CD8-positive, alpha-beta T cell (primary cell): ENCODE measurements at regions of chr3 and their contacts with region 1.

Region 1: GRCh38 chr3:184874709-184875644 is 63.0 kb downstream of the VPS8 start:
- DNase-seq: peak in 2 of 9 experiments; percentile 6 to 12
- ATAC-seq: no peak
- H3K4me3 ChIP-seq: no peak overlapping the region
- H3K4me3 Mint-ChIP-seq: no peak overlapping the region
- H3K27ac ChIP-seq: no peak overlapping the region
- H3K27ac Mint-ChIP-seq: peak overlapping the region; percentile 13
- H3K4me1 ChIP-seq: no peaks in the 10 kb centered on the region
- H3K4me1 Mint-ChIP-seq: no peaks in the 10 kb centered on the region
- H3K27me3 ChIP-seq: no peaks in the 10 kb centered on the region
- H3K27me3 Mint-ChIP-seq: no peaks in the 10 kb centered on the region
- CTCF ChIP-seq: peak; percentile 44

Region 2: GRCh38 chr3:183937610-183938230 is 937.3 kb before region 1 on chr3:
- CTCF ChIA-PET with region 1: no interaction called
- POLR2A ChIA-PET with region 1: no interaction called
- intact Hi-C with region 1: no loop called
- DNase-seq: no peak
- ATAC-seq: no peak
- H3K4me3 ChIP-seq: no peak overlapping the region
- H3K4me3 Mint-ChIP-seq: no peak overlapping the region
- H3K27ac ChIP-seq: no peak overlapping the region
- H3K27ac Mint-ChIP-seq: no peak overlapping the region
- H3K4me1 ChIP-seq: no peaks in the 10 kb centered on the region
- H3K4me1 Mint-ChIP-seq: no peaks in the 10 kb centered on the region
- H3K27me3 ChIP-seq: no peaks in the 10 kb centered on the region
- H3K27me3 Mint-ChIP-seq: no peaks in the 10 kb centered on the region
- CTCF ChIP-seq: no peak

Region 3: GRCh38 chr3:184788751-184789150 is 86.2 kb before region 1 on chr3:
- CTCF ChIA-PET with region 1: no interaction called
- POLR2A ChIA-PET with region 1: no interaction called
- intact Hi-C with region 1: no loop called
- DNase-seq: no peak
- ATAC-seq: no peak
- H3K4me3 ChIP-seq: no peak overlapping the region
- H3K4me3 Mint-ChIP-seq: no peak overlapping the region
- H3K27ac ChIP-seq: no peak overlapping the region
- H3K27ac Mint-ChIP-seq: no peak overlapping the region
- H3K4me1 ChIP-seq: peaks cover 25% of the 10 kb centered on the region
- H3K4me1 Mint-ChIP-seq: peaks cover 27% of the 10 kb centered on the region
- H3K27me3 ChIP-seq: no peaks in the 10 kb centered on the region
- H3K27me3 Mint-ChIP-seq: peaks cover 4% of the 10 kb centered on the region
- CTCF ChIP-seq: no peak

Region 4: GRCh38 chr3:185176750-185177359 is 301.9 kb after region 1 on chr3:
- CTCF ChIA-PET with region 1: interaction called, 5 read pairs
- POLR2A ChIA-PET with region 1: no interaction called
- intact Hi-C with region 1: loop called in 1 of 2 experiments (anchors 5 kb)
- DNase-seq: peak in 2 of 9 experiments; percentile 19 to 36
- ATAC-seq: no peak
- H3K4me3 ChIP-seq: no peak overlapping the region
- H3K4me3 Mint-ChIP-seq: no peak overlapping the region
- H3K27ac ChIP-seq: no peak overlapping the region
- H3K27ac Mint-ChIP-seq: no peak overlapping the region
- H3K4me1 ChIP-seq: no peaks in the 10 kb centered on the region
- H3K4me1 Mint-ChIP-seq: no peaks in the 10 kb centered on the region
- H3K27me3 ChIP-seq: peaks cover 3 to 9% of the 10 kb centered on the region in 2 experiments
- H3K27me3 Mint-ChIP-seq: peaks cover 3% of the 10 kb centered on the region
- CTCF ChIP-seq: peak; percentile 51

Region 5: GRCh38 chr3:185207931-185208746 is 333.2 kb after region 1 on chr3:
- CTCF ChIA-PET with region 1: no interaction called
- POLR2A ChIA-PET with region 1: no interaction called
- intact Hi-C with region 1: no loop called
- DNase-seq: peak in 1 of 9 experiments; percentile 5
- ATAC-seq: no peak
- H3K4me3 ChIP-seq: no peak overlapping the region
- H3K4me3 Mint-ChIP-seq: no peak overlapping the region
- H3K27ac ChIP-seq: no peak overlapping the region
- H3K27ac Mint-ChIP-seq: no peak overlapping the region
- H3K4me1 ChIP-seq: no peaks in the 10 kb centered on the region
- H3K4me1 Mint-ChIP-seq: no peaks in the 10 kb centered on the region
- H3K27me3 ChIP-seq: no peaks in the 10 kb centered on the region
- H3K27me3 Mint-ChIP-seq: no peaks in the 10 kb centered on the region
- CTCF ChIP-seq: no peak

Region 6: DNA sequence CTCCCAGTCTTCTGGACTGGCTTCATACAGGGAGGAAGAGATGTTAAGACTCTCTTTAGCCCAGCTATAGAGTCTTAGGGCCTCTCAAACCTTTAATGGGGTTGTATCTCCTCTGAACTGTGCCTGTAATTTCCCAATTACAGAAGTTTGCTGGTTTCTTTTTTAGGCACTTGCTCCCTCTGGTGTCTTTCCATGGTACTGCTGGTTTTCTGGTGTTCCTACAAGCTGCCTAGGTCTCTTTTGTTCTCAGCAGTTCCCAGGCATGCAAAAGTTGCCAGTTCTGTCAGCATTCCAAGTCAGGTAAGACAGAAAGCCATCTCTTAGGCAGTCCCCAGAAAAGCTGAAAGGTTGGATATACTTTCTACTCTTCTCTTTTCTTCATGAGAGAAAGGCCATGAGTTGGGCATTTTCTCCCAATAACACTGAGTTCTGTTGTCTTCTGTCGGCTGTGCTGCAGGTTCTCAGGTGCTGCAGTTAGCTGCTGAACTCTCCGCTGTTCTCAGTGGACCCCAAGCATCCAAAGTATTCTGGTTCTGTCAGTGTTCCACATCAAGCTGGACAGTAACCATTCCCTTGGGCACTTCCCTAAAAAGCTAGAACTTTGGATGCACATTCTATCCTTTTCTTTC is 433.3 kb after region 1 on chr3:
- CTCF ChIA-PET with region 1: no interaction called
- POLR2A ChIA-PET with region 1: no interaction called
- intact Hi-C with region 1: loop called (anchors 2 to 10 kb)
- DNase-seq: peak in 8 of 9 experiments; percentile 3 to 60 (median 27)
- ATAC-seq: no peak
- H3K4me3 ChIP-seq: no peak overlapping the region
- H3K4me3 Mint-ChIP-seq: no peak overlapping the region
- H3K27ac ChIP-seq: no peak overlapping the region
- H3K27ac Mint-ChIP-seq: no peak overlapping the region
- H3K4me1 ChIP-seq: no peaks in the 10 kb centered on the region
- H3K4me1 Mint-ChIP-seq: no peaks in the 10 kb centered on the region
- H3K27me3 ChIP-seq: no peaks in the 10 kb centered on the region
- H3K27me3 Mint-ChIP-seq: no peaks in the 10 kb centered on the region
- CTCF ChIP-seq: peak; percentile 75